Endothelial cell of umbilical vein (primary cell): ENCODE measurements at regions of chr15 and their contacts with region 1.

Region 1: GRCh38 chr15:92655178-92655995 is at the start of gene FAM174B:
- DNase-seq: peak; percentile 51
- H3K4me3 ChIP-seq: peak within 1 kb of the TSS; percentile 47 to 93 (median 81)
- H3K27ac ChIP-seq: peak within 1 kb of the TSS; percentile 56
- H3K4me1 ChIP-seq: peaks cover 22% of the 10 kb centered on the region
- H3K27me3 ChIP-seq: no peaks in the 10 kb centered on the region
- CTCF ChIP-seq: no peak
- POLR2A ChIP-seq: peak; percentile 53
- total RNA-seq, gene FAM174B: 20.0 and 30.2 TPM in 2 replicates

Region 2: DNA sequence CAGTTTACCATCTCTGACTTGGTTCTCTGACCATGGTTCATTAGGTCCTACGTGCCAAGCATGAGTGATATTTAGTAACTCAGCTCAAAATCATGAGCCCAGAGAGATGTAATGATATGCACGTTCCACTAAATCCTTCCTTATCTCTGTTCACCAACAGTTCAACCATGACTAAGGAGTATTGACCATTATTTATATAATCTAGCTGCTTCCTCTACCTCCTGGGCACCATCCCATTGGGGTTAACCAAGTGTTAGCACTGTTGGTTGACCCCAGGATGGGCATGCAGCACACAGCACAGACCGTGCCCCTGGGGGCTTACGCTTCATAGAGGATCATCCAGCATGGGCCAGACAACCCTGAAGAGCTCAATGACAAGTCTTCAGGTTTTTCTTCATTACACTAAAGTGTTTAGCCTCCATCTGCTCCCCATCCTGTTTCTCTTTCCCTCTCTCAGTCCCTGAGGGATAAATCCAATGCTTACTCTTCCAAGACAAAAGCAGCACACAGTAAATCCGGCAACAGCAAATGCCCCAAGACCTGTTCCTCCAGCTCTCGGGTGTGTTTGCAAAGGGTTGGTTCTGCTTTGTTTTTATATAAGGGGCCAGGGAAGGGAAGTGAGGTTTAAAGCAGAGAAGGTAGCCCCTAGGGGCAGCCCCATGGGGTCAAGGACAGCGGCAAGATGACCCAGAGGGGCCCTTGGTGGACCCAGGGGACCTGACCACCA is 10.2 kb before region 1 on chr15:
- CTCF ChIA-PET with region 1: interaction called, 10 read pairs
- POLR2A ChIA-PET with region 1: no interaction called
- dilution Hi-C with region 1: no loop called
- intact Hi-C with region 1: no loop called
- DNase-seq: peak; percentile 87
- H3K4me3 ChIP-seq: no peak overlapping the region
- H3K27ac ChIP-seq: peak overlapping the region; percentile 72
- H3K4me1 ChIP-seq: peaks cover 35% of the 10 kb centered on the region
- H3K27me3 ChIP-seq: no peaks in the 10 kb centered on the region
- CTCF ChIP-seq: no peak
- POLR2A ChIP-seq: peak; percentile 71

Region 3: GRCh38 chr15:92709110-92709790 is 53.9 kb after region 1 on chr15:
- CTCF ChIA-PET with region 1: interaction called, 25 read pairs
- POLR2A ChIA-PET with region 1: interaction called, 3 read pairs
- dilution Hi-C with region 1: no loop called
- intact Hi-C with region 1: loop called (anchors 5 kb)
- DNase-seq: peak; percentile 79
- H3K4me3 ChIP-seq: no peak overlapping the region
- H3K27ac ChIP-seq: peak overlapping the region; percentile 84
- H3K4me1 ChIP-seq: peaks cover 30% of the 10 kb centered on the region
- H3K27me3 ChIP-seq: no peaks in the 10 kb centered on the region
- CTCF ChIP-seq: no peak
- POLR2A ChIP-seq: no peak